Pancreas (tissue), 10 donors: ENCODE measurements at regions of chr14 and their contacts with region 1.

Region 1: DNA sequence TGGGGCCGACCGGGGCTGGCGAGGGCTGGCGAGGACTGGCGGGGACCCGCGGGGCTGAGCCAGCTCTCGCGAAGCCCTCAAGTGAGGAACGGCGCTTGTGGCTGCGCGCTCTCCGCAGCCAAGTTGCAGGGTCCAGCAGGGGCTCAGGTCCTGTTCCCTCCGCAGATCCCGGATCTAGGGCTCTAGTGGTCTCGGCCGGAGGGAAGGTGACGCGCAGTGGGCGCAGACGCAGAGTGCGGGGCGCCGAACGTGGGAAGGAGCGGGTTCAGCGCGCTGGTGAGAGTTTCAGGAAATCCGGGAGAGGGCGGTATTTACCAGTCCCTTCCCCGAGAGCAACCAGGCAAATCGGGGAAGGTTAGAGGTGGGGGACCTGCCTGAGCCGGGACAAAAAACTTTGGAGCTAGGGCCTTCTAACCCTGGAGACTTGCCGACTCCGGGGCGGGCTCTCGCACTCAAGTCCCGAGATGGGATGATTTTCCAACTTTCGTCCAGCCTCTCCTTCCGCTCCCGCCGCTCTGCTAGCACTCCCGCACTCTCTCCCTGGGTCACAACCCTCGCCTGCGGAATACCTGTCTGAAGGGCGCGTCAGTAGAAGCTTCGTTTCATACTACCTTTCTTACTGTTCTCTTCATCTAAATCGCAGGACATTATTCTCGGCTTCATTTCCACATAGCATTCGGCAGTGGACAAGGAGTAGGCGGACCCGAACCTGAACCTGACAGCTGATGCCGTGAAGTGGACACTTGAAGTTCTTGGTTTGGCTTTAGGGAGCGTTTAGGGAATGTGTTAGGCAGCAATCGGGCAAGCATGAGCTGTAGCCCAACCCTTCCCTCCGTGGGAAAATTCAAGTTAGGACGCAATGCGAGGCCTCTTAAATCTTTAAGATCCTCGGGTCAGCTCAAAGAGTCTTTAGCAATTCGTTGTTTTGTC is 13.6 kb upstream of the PAX9 start:
- DNase-seq: peak in 5 of 6 donors; percentile 27 to 73 (median 37)
- ATAC-seq: peak; percentile 84 to 95 (median 94)
- H3K4me3 ChIP-seq: peak overlapping the region; percentile 16 to 52 (median 31)
- H3K27ac ChIP-seq: no peak overlapping the region
- H3K4me1 ChIP-seq: peaks cover 0 to 11% (median 5%) of the 10 kb centered on the region in 3 donors
- H3K27me3 ChIP-seq: peaks cover 5 to 53% (median 20%) of the 10 kb centered on the region in 4 donors
- CTCF ChIP-seq: peak in 3 of 4 donors; percentile 26 to 29 (median 26)

Region 2: DNA sequence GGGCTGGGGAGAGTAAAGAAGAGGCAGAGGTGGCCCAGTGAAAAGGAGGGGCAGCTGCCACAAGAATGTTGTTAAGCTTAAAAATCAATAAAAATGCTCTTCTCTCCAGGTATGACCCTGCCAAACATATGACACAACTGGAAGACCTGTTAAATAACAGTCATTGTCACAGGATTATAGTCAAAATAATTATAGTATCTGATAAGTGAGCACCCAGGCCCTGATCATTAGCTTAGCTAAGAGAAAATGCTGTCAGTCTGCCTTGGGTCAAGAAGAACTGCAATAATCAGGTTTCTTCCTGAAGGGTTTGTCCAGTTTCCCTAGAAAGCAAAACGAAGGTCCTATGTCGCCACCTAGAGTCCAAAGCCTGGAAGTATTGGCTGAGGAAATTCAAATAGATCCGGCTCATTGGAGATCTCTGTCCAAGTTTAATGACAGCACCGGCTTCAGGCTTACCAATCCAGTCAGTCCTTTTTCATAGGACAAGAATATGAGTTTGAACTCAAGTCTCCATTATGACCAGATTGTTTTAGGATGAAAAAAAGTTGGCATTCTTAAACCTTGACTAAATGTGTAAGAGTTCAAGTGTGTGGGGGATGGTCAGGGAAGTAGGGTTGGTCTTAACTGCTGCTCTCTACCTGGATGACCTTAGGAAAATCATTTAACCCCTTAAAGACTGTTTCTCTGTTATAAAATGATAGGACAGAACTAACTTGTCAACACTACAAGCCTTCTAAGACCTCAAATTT is 43.2 kb before region 1 on chr14:
- intact Hi-C with region 1: no loop called
- DNase-seq: peak in 3 of 6 donors; percentile 31 to 61 (median 37)
- ATAC-seq: peak; percentile 76 to 98 (median 93)
- H3K4me3 ChIP-seq: no peak overlapping the region
- H3K27ac ChIP-seq: no peak overlapping the region
- H3K4me1 ChIP-seq: no peaks in the 10 kb centered on the region
- H3K27me3 ChIP-seq: no peaks in the 10 kb centered on the region
- CTCF ChIP-seq: peak; percentile 57 to 77 (median 70)

Region 3: DNA sequence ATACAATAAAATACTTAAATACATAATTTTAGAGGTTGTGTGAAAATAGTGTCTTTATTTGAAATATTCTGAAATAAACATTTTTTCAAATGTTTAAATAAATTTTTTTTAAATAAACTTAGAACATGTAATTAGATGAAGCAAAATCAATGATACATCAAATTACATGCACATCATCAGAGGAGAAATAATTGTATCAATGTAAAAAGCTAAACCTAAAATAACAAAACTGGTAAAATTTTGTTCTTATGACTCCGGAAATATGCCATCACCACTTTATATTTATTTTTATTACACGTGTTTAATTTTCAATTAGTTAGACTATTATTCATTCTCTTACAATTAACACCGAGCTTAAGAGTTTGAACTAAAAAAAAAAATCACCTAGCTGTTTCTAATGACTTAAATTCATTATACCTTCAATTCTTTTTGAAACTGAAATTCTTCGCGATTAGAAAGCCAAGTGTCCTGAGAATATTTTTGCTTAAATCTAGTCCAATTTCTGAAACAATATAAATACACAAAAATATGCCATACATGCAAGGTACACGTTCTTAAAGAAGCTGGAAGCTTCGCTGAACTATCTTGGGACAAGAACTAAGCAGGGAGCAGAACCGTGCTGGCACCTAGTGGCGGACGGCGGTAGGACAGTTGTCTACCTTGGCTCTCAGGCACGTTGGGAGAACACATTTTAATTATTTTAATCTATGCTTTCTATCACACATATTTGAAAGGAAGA is 293.9 kb after region 1 on chr14:
- intact Hi-C with region 1: loop called in 1 of 3 experiments (anchors 5 kb)
- DNase-seq: peak; percentile 46 to 91 (median 74)
- ATAC-seq: peak; percentile 69 to 96 (median 94)
- H3K4me3 ChIP-seq: peak overlapping the region in 1 of 4 donors; percentile 13
- H3K27ac ChIP-seq: no peak overlapping the region
- H3K4me1 ChIP-seq: no peaks in the 10 kb centered on the region
- H3K27me3 ChIP-seq: peaks cover 0 to 17% (median 5%) of the 10 kb centered on the region in 4 donors
- CTCF ChIP-seq: peak; percentile 71 to 95 (median 90)

Region 4: GRCh38 chr14:37142835-37143401 is 494.8 kb after region 1 on chr14:
- intact Hi-C with region 1: loop called in 1 of 3 experiments (anchors 10 kb)
- DNase-seq: no peak
- ATAC-seq: peak in 3 of 4 donors; percentile 46 to 76 (median 59)
- H3K4me3 ChIP-seq: no peak overlapping the region
- H3K27ac ChIP-seq: no peak overlapping the region
- H3K4me1 ChIP-seq: peaks cover 0 to 3% (median 0%) of the 10 kb centered on the region in 3 donors
- H3K27me3 ChIP-seq: no peaks in the 10 kb centered on the region
- CTCF ChIP-seq: no peak